Activated CD8-positive, alpha-beta memory T cell treated with anti-CD3 and anti-CD28 coated beads, Interleukin-2, amount 10 ng/mL, durations not matched to agents 7 days and 5 days (primary cell): ENCODE measurements at regions of chr10 and their contacts with region 1.

Region 1: GRCh38 chr10:70093335-70093944 is 39.2 kb downstream of the AIFM2 start:
- DNase-seq: peak; percentile 71
- ATAC-seq: peak; percentile 81
- H3K4me3 Mint-ChIP-seq: peak overlapping the region; percentile 80
- H3K27ac Mint-ChIP-seq: peak overlapping the region; percentile 89
- H3K4me1 Mint-ChIP-seq: peaks cover 37% of the 10 kb centered on the region
- H3K27me3 Mint-ChIP-seq: no peaks in the 10 kb centered on the region

Region 2: DNA sequence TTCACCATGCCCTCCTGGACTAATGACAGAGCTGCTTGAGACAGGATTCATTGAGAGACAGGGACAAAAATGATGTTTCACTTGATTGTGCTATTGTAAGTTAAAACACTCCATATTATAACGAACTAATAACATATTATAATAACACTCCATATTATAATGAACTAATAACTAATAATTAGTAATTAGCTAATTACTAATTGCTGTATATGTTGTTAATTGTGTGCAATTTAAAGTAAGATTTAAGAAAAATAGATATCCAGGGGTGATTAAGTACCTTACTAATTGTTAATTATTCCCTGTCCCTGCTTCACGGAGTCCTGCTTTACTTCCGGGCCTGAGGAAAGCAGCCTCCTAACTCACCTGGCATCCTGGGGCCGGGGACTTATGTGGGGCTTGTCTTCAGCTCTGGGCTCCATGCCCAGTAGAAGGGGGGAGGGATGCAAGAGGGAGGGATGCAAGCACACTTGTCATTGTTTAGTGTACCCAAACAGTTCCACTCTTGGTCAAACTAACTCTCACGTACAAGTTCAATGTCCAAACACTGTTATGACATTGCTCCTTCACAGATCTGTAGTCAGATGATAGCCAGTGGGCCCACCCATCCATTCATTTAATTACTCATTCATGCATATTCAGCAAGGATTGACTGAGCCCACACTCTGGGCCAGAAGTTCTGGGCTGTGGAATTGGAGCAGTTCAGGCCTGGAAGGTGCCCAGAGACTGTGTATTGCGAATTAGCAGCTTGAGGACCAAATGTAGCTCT is 237.9 kb before region 1 on chr10:
- CTCF ChIA-PET with region 1: no interaction called
- DNase-seq: no peak
- ATAC-seq: no peak
- H3K4me3 Mint-ChIP-seq: no peak overlapping the region
- H3K27ac Mint-ChIP-seq: no peak overlapping the region
- H3K4me1 Mint-ChIP-seq: no peaks in the 10 kb centered on the region
- H3K27me3 Mint-ChIP-seq: peaks cover 8% of the 10 kb centered on the region

Region 3: GRCh38 chr10:70106958-70107791 is 13.7 kb after region 1 on chr10:
- CTCF ChIA-PET with region 1: interaction called, 90 read pairs
- DNase-seq: no peak
- ATAC-seq: peak; percentile 23
- H3K4me3 Mint-ChIP-seq: no peak overlapping the region
- H3K27ac Mint-ChIP-seq: no peak overlapping the region
- H3K4me1 Mint-ChIP-seq: peaks cover 24% of the 10 kb centered on the region
- H3K27me3 Mint-ChIP-seq: no peaks in the 10 kb centered on the region

Region 4: DNA sequence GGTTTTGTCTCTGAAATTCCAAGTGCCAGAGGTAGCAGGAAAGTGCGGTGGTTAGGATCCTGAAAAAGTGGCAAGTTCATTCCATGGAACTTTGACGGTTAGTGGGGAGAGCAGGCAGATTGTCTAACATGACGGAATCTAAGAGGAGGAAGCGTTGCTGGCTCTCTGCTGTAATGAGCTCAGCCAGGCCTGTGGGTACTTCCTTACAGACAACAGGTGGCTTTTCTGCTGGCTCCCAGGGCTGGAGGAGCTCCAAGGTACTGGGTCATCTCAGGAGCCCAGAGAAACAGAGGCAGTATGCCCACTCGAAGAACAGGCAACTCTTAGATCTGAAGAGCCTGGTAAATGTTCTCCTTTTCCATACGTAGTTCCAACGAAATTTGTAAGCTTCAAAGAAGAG is 42.2 kb after region 1 on chr10:
- CTCF ChIA-PET with region 1: no interaction called
- DNase-seq: no peak
- ATAC-seq: no peak
- H3K4me3 Mint-ChIP-seq: no peak overlapping the region
- H3K27ac Mint-ChIP-seq: no peak overlapping the region
- H3K4me1 Mint-ChIP-seq: peaks cover 27% of the 10 kb centered on the region
- H3K27me3 Mint-ChIP-seq: no peaks in the 10 kb centered on the region

Region 5: GRCh38 chr10:70302292-70302691 is 208.9 kb after region 1 on chr10:
- CTCF ChIA-PET with region 1: no interaction called
- DNase-seq: no peak
- ATAC-seq: no peak
- H3K4me3 Mint-ChIP-seq: no peak overlapping the region
- H3K27ac Mint-ChIP-seq: no peak overlapping the region
- H3K4me1 Mint-ChIP-seq: peaks cover 2% of the 10 kb centered on the region
- H3K27me3 Mint-ChIP-seq: no peaks in the 10 kb centered on the region